ENCODE measurements at regions of chr13 and their contacts with region 1.

Region 1: DNA sequence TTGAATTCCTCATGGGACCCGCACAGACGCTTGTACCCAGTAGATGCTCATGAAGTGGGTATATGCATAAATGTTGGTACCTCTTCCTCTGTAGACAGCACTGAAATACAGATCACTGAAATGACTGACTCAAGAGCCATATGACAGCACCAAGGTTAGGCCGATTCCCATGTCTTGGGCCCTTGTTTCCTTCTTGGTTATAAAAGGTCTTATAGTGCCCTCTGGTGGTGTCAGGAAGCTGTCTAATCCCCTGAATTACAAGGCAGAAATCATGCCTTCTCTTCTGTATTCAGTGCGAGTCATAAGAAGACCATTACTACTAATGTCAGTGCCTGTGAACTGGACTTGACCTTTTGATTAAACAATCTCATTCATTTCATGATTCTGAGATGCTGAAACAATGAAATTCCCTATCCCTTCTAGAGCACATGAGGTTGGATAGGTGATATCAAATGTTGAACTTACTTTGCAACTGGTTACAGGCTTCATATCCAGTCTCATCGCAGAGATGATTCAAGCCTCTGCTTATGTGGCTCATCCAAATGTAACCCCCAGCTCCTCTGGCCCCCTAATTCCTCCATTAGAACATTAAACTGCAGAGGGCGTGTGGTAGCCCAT is 59.7 kb downstream of the SPATA13 start:
- DNase-seq: peak; percentile 49
- H3K4me3 ChIP-seq: no peak overlapping the region
- CTCF ChIP-seq: peak; percentile 63

Region 2: GRCh38 chr13:23921451-23921888 is 298.7 kb before region 1 on chr13:
- CTCF ChIA-PET with region 1: interaction called, 39 read pairs
- POLR2A ChIA-PET with region 1: interaction called, 4 read pairs
- DNase-seq: no peak
- H3K4me3 ChIP-seq: no peak overlapping the region
- CTCF ChIP-seq: peak; percentile 37

Region 3: DNA sequence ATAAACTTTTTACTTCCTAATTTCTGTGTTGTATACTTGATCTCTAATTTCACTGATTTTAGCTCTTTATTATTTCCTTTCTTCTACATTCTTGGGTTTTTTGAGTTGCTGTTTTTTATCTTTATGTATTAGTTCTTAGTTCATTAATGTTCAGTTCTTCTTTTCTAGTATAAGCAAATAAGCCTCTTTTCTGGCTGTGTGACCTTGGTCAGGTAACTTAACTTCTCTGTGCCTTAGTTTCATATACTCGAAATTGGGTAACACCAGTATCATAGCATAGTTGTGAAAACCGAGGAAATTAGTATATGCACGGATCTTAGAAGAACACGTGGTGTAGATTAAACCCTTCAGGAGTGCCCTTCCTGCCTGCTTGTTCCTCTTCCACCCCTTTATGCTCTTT is 192.7 kb before region 1 on chr13:
- CTCF ChIA-PET with region 1: interaction called, 438 read pairs
- POLR2A ChIA-PET with region 1: no interaction called
- DNase-seq: no peak
- H3K4me3 ChIP-seq: no peak overlapping the region
- CTCF ChIP-seq: no peak

Region 4: GRCh38 chr13:24038841-24039330 is 181.3 kb before region 1 on chr13:
- CTCF ChIA-PET with region 1: interaction called, 13 read pairs
- POLR2A ChIA-PET with region 1: interaction called, 4 read pairs
- DNase-seq: no peak
- H3K4me3 ChIP-seq: no peak overlapping the region
- CTCF ChIP-seq: no peak

Region 5: DNA sequence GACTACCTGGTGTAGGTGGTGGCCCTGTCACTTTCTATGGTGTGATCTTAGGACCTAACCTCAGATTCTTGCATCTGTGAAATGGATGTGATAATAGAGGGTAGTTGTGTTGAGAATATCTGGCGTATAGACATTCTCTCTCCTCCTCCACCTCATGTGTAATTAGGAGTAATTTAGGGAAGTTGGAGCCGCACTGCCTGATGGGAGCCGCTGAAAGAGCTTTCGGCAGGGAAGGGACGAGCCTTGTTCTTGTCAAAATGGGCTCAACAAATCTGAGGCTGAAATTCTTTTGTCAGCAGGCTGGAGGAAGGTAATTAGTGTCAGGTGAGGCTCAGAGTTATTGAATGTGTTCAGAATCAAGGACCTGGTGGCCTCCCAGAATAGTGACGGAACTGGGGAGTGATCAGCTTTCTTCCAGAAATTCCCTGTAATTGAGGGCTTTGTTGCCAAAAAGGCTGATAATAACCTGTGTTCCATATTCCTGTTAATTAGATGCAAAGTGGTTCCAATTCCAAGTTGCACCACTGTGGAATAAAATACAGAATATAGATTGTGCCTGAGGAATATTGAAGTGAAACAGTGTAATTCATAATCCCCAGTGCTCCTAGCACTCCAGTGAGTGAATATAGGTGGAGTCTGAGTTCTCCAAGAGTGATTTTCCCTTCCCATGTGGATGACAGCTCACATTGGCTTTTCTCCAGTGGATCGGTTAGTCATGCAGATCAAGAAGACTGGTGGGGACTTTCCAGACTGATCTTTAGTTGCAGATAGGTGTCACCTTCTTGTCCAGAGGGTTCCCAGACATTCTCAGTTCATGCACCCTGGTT is 12.1 kb before region 1 on chr13:
- CTCF ChIA-PET with region 1: interaction called, 19 read pairs
- POLR2A ChIA-PET with region 1: no interaction called
- DNase-seq: peak; percentile 71
- H3K4me3 ChIP-seq: no peak overlapping the region
- CTCF ChIP-seq: no peak

Region 6: DNA sequence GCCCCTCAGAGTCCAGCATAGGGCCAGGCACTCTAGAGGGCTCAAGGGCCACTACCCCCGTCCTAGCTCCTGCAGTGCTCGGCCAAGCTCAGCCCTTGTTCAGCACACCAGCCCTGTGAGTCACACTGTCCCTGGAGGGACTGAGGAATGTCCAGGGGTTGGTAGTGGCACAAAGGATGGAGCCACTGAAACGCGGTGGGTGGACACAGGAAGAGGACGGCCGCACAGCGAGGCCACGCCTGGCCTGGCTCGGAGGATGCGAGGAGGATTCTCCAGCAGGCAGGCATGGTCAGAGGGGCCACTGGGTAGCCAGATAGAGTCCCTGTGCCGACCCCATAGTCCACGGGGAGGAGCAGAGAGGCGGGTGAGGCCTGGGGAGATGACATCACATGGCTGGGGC is 134.9 kb after region 1 on chr13:
- CTCF ChIA-PET with region 1: no interaction called
- POLR2A ChIA-PET with region 1: no interaction called
- DNase-seq: no peak
- H3K4me3 ChIP-seq: no peak overlapping the region
- CTCF ChIP-seq: no peak